ENCODE measurements at regions of chr4 and their contacts with region 1.

Region 1: GRCh38 chr4:26459054-26459755 is 31.1 kb downstream of the CCKAR start:
- DNase-seq: peak; percentile 80
- H3K4me3 ChIP-seq: peak overlapping the region; percentile 55
- H3K27ac ChIP-seq: no peak overlapping the region
- H3K4me1 ChIP-seq: peaks cover 16% of the 10 kb centered on the region
- H3K27me3 ChIP-seq: no peaks in the 10 kb centered on the region

Region 2: DNA sequence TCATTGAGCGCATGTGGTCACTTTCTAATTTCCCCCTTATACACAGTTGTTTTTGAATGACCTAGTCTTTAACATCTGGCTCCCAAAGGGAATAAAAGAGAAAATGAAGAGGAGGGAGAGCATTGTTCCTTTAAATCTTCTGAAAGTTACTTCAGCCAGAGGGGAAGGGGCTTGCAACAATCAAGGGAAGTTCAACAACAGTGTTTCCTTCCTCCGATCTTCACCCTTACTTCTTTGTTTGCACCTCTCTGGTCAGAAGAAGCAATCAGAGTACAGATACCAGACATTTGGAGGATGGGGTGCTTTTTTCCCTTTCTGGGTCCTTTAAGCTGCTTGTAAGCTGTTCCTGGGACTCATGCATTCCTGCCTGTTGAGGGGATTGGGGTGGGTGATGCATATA is 250.0 kb after region 1 on chr4:
- in situ Hi-C with region 1: loop called (anchors 5 kb)
- DNase-seq: no peak
- H3K4me3 ChIP-seq: no peak overlapping the region
- H3K27ac ChIP-seq: no peak overlapping the region
- H3K4me1 ChIP-seq: no peaks in the 10 kb centered on the region
- H3K27me3 ChIP-seq: no peaks in the 10 kb centered on the region

Region 3: GRCh38 chr4:27010334-27010940 is 551.2 kb after region 1 on chr4:
- in situ Hi-C with region 1: loop called (anchors 25 kb)
- DNase-seq: peak; percentile 81
- H3K4me3 ChIP-seq: peak overlapping the region; percentile 35; the same call in 1 of the 2 replicates
- H3K27ac ChIP-seq: no peak overlapping the region
- H3K4me1 ChIP-seq: peaks cover 48% of the 10 kb centered on the region
- H3K27me3 ChIP-seq: no peaks in the 10 kb centered on the region